B cell (primary cell): ENCODE measurements at regions of chr20 and their contacts with region 1.

Region 1: DNA sequence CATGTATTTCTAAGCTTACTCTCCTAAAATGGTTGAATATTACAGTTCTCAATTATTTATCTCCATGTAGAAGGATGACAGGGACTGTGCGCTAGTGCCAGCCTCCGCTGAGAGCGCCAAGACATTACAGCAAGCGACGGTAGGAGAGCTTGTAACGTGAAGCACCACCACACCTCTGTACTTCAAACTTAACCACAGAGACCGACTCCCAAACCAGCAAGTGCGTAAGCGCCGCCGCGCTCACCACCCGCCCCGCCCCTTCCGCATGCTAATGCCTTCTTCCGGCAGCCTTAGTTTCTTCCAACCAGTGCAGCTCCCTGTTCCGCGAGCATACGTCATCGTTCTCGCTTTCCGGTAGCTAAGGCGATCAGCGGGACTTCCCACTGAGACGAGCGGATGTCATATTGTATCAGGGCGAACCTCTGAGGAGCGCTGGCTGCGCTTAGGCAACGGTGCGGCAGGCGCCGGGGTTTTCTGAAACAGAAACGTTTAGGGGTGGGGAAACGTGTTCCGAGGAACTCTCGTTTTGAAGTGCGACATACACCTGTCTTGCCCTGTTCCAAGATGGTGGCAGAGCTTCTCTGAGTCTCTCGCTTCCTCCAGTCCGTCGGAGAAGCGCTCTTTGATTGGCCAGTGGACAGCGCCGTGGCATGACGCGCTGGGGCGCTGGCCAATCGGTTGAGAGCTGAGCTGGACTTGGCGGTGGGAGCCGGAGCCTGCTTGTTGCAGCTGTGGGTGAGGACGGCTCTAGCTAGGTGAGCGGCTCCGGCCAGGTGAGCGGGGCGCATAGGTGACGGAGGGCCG is at the start of gene SEC23B:
- DNase-seq: peak; percentile 100
- ATAC-seq: peak; percentile 89
- H3K4me3 ChIP-seq: peak within 1 kb of the TSS; percentile 57 to 88 (median 80)
- H3K4me3 Mint-ChIP-seq: peak within 1 kb of the TSS; percentile 99
- H3K27ac ChIP-seq: peak within 1 kb of the TSS; percentile 98
- H3K27ac Mint-ChIP-seq: peak within 1 kb of the TSS; percentile 98
- H3K4me1 ChIP-seq: peaks cover 13 to 17% of the 10 kb centered on the region in 2 donors
- H3K4me1 Mint-ChIP-seq: peaks cover 22% of the 10 kb centered on the region
- H3K27me3 ChIP-seq: no peaks in the 10 kb centered on the region
- H3K27me3 Mint-ChIP-seq: peaks cover 6% of the 10 kb centered on the region
- CTCF ChIP-seq: no peak
- total RNA-seq, gene SEC23B: 39.4 and 48.1 TPM in 2 replicates

Region 2: DNA sequence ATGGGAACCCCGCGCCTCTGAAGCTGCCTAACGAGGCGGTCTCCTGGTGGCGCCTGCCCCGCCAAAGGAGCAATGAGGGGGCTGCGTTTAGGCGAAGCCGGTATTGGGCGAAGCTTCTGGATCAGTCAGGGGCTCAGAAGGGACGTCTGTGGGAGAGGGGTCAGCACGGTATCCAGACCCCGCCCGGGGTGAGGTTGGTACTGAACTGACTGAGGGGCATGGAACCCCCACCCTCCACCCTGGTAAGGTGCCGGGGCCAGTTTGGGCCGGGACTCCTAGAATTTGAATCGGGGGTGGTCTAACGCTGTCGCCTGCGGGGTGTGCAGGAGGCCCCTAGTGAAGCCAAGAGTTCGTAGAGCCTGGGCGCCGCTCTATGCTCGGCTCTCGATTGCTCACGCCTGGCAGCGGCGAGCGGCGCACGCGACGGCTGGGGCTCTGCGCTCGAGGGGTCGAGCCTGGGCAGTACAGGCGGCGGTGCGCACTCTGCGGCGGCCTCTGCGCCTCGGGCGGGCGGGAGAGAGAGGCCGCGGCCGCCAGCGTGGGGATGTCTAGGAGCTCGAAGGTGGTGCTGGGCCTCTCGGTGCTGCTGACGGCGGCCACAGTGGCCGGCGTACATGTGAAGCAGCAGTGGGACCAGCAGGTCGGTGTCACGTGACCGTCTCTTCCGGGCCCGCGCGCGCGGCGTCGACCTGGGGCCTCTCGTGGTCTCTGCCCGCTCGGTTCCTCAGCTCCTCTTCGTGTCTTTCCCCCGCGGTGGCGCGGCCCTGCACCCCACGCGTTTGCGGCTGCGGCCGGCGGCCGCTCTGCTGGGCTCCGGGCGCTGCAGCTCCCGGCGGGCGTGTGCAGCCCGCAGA is 369.8 kb before region 1 on chr20 and contains the starts of genes KAT14 and PET117:
- CTCF ChIA-PET with region 1: no interaction called
- POLR2A ChIA-PET with region 1: no interaction called
- intact Hi-C with region 1: loop called (anchors 5 kb)
- DNase-seq: peak; percentile 97
- ATAC-seq: peak; percentile 88
- H3K4me3 ChIP-seq: peak within 1 kb of the TSS; percentile 48 to 93 (median 85)
- H3K4me3 Mint-ChIP-seq: peak within 1 kb of the TSS; percentile 92
- H3K27ac ChIP-seq: peak within 1 kb of the TSS; percentile 65 to 77
- H3K27ac Mint-ChIP-seq: peak within 1 kb of the TSS; percentile 95
- H3K4me1 ChIP-seq: peaks cover 15 to 25% of the 10 kb centered on the region in 2 donors
- H3K4me1 Mint-ChIP-seq: peaks cover 27% of the 10 kb centered on the region
- H3K27me3 ChIP-seq: peaks cover 0 to 4% (median 0%) of the 10 kb centered on the region in 4 experiments
- H3K27me3 Mint-ChIP-seq: no peaks in the 10 kb centered on the region
- CTCF ChIP-seq: no peak
- total RNA-seq, gene KAT14: 15.1 and 15.5 TPM in 2 replicates
- total RNA-seq, gene PET117: 10.7 and 13.0 TPM in 2 replicates

Region 3: DNA sequence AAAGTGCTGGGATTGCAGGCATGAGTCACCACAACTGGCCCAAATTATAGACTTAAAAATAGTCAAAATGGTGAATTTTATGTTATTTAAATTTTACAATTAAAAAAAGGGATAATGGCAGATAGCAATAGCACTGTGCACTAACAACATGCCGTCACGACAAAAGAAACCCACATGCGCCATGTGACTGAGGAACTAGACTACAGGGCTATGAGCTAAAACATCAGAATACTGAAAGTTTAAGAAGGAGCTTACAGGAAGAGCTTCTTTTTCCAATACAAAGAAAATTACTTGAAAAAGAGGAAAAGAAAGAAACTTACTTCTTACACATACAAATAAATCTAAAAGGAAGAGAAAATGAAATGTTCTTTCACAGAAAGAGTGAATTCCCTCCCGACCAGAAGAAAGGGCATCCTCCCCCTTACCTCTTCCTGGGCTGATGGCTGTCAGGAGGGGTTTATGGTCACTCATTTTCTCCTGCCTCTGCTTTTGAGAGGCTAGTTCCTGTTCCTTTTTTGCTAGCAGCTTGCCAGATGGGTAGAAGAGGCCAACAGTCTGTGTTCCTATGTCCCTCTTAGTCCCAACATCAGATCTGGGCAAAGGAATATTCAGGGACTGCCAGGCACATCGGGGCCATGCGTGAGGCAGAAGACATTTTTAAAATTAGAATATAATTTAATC is 95.1 kb before region 1 on chr20:
- CTCF ChIA-PET with region 1: interaction called, 3 read pairs
- POLR2A ChIA-PET with region 1: no interaction called
- intact Hi-C with region 1: loop called (anchors 2 kb)
- DNase-seq: peak; percentile 52
- ATAC-seq: peak; percentile 20
- H3K4me3 ChIP-seq: peak overlapping the region in 1 of 5 experiments; percentile 25
- H3K4me3 Mint-ChIP-seq: peak overlapping the region; percentile 63
- H3K27ac ChIP-seq: peak overlapping the region; percentile 65 to 70
- H3K27ac Mint-ChIP-seq: peak overlapping the region; percentile 70
- H3K4me1 ChIP-seq: peaks cover 7 to 15% of the 10 kb centered on the region in 2 donors
- H3K4me1 Mint-ChIP-seq: peaks cover 11% of the 10 kb centered on the region
- H3K27me3 ChIP-seq: no peaks in the 10 kb centered on the region
- H3K27me3 Mint-ChIP-seq: no peaks in the 10 kb centered on the region
- CTCF ChIP-seq: no peak

Region 4: GRCh38 chr20:18496740-18497592 is 10.5 kb before region 1 on chr20 and contains the start of gene RBBP9:
- CTCF ChIA-PET with region 1: interaction called, 34 read pairs
- POLR2A ChIA-PET with region 1: interaction called, 27 read pairs
- intact Hi-C with region 1: loop called (anchors 1 kb)
- DNase-seq: peak; percentile 81
- ATAC-seq: peak; percentile 100
- H3K4me3 ChIP-seq: peak within 1 kb of the TSS; percentile 74 to 96 (median 87)
- H3K4me3 Mint-ChIP-seq: peak within 1 kb of the TSS; percentile 98
- H3K27ac ChIP-seq: peak within 1 kb of the TSS; percentile 38 to 78
- H3K27ac Mint-ChIP-seq: peak within 1 kb of the TSS; percentile 89
- H3K4me1 ChIP-seq: peaks cover 7 to 11% of the 10 kb centered on the region in 2 donors
- H3K4me1 Mint-ChIP-seq: peaks cover 18% of the 10 kb centered on the region
- H3K27me3 ChIP-seq: no peaks in the 10 kb centered on the region
- H3K27me3 Mint-ChIP-seq: peaks cover 3% of the 10 kb centered on the region
- CTCF ChIP-seq: no peak
- total RNA-seq, gene RBBP9: 9.3 and 10.2 TPM in 2 replicates

Region 5: GRCh38 chr20:18524646-18525045 is 17.2 kb after region 1 on chr20:
- CTCF ChIA-PET with region 1: no interaction called
- POLR2A ChIA-PET with region 1: no interaction called
- intact Hi-C with region 1: no loop called
- DNase-seq: no peak
- ATAC-seq: no peak
- H3K4me3 ChIP-seq: no peak overlapping the region
- H3K4me3 Mint-ChIP-seq: no peak overlapping the region
- H3K27ac ChIP-seq: no peak overlapping the region
- H3K27ac Mint-ChIP-seq: no peak overlapping the region
- H3K4me1 ChIP-seq: no peaks in the 10 kb centered on the region
- H3K4me1 Mint-ChIP-seq: no peaks in the 10 kb centered on the region
- H3K27me3 ChIP-seq: no peaks in the 10 kb centered on the region
- H3K27me3 Mint-ChIP-seq: no peaks in the 10 kb centered on the region
- CTCF ChIP-seq: no peak

Region 6: GRCh38 chr20:18587665-18588573 is 80.5 kb after region 1 on chr20 and contains the start of gene DTD1:
- CTCF ChIA-PET with region 1: interaction called, 5 read pairs
- POLR2A ChIA-PET with region 1: interaction called, 4 read pairs
- intact Hi-C with region 1: loop called (anchors 2 kb)
- DNase-seq: peak; percentile 89
- ATAC-seq: peak; percentile 96
- H3K4me3 ChIP-seq: peak within 1 kb of the TSS; percentile 47 to 77 (median 73)
- H3K4me3 Mint-ChIP-seq: peak within 1 kb of the TSS; percentile 94
- H3K27ac ChIP-seq: peak within 1 kb of the TSS; percentile 44 to 58
- H3K27ac Mint-ChIP-seq: peak within 1 kb of the TSS; percentile 86
- H3K4me1 ChIP-seq: peaks cover 17% of the 10 kb centered on the region in 2 donors
- H3K4me1 Mint-ChIP-seq: peaks cover 23% of the 10 kb centered on the region
- H3K27me3 ChIP-seq: peaks cover 0 to 10% (median 2%) of the 10 kb centered on the region in 4 experiments
- H3K27me3 Mint-ChIP-seq: peaks cover 8% of the 10 kb centered on the region
- CTCF ChIP-seq: peak; percentile 68
- total RNA-seq, gene DTD1: 18.7 and 18.9 TPM in 2 replicates

Region 7: DNA sequence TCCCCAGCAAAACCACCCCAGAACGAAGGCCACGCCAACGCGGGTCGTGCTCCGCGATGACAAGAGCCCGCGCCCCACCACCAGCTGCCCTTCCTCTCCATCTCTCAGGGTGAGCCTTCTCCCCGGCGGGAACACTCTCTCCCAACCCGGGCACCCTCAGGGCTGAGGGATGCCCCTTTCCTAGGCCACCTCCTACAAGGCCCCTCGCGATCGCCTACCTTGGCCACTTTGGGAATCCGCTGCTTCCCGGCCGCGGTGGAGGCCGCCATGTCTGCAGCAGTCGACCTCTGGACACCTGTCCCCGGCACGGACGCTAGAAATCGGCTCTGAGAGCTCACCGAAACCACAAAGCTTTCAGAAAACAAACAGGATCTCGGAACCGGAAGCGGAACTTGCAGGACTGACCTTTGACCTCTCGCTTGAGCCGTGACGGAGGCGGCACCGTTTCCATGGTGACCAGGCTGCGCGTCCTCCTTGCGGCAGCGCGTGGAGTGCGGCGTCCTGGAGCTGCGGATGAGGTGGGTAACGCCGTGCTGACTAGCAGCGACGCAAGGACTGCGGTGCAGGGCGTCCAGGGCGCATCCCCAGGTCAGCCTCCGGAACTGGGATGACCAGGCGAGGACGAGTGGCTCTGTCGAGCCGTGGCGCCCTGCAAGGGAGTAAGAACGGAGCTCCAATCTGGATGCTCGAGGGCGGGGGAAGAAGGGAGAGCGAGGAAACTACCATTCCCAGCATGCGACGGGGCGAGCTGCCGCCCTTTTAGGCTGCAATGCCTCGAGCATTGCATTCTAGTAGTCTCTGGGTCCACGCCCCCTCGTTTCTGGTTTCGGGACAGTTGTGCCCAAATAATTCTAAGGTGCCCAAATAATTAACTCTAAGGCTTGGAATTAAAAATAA is 1544.9 kb after region 1 on chr20 and contains the starts of genes CFAP61 and CRNKL1:
- CTCF ChIA-PET with region 1: no interaction called
- POLR2A ChIA-PET with region 1: no interaction called
- intact Hi-C with region 1: loop called (anchors 5 kb)
- DNase-seq: peak; percentile 99
- ATAC-seq: peak; percentile 93
- H3K4me3 ChIP-seq: peak within 1 kb of the TSS; percentile 85 to 98 (median 97)
- H3K4me3 Mint-ChIP-seq: peak within 1 kb of the TSS; percentile 99
- H3K27ac ChIP-seq: peak within 1 kb of the TSS; percentile 78 to 91
- H3K27ac Mint-ChIP-seq: peak within 1 kb of the TSS; percentile 97
- H3K4me1 ChIP-seq: peaks cover 7 to 14% of the 10 kb centered on the region in 2 donors
- H3K4me1 Mint-ChIP-seq: peaks cover 23% of the 10 kb centered on the region
- H3K27me3 ChIP-seq: peaks cover 0 to 9% (median 5%) of the 10 kb centered on the region in 4 experiments
- H3K27me3 Mint-ChIP-seq: peaks cover 7% of the 10 kb centered on the region
- CTCF ChIP-seq: no peak
- total RNA-seq, gene CFAP61: not detected in 2 replicates
- total RNA-seq, gene CRNKL1: 25.5 and 32.1 TPM in 2 replicates